Activated CD4-positive, alpha-beta T cell treated with anti-CD3 and anti-CD28 coated beads for 36 hours (primary cell): ENCODE measurements at regions of chr6 and their contacts with region 1.

Region 1: DNA sequence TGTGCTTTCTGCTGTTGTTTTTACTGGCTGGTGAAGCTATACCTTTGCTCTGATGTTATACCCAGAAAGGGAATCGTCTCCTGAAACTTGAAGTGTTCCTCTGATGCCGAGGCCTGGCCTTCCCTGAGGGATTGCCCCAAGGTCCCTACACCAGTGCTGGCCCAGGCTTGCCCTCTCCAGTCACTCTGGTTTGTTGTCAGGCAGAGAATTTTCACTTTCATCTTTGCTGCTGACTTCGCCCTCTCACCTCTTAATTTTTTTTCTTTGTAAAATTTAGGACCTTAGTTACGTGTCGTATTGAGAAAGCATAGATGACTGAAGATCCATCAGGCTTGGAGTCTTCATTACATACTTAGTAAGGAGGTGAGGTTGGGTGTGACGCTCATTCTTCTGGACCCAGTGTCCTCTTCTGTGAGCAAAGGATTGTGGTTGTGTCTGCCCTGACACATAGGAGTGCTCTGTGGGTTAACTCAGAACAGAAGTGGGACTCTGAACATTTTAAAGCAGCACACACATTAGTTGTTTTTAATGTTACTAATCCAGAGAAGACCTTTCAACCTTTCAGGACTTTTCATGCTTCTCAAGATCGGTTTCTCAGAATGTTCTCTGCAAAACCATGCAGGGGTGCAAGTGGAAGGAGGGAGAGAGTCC is 45.4 kb downstream of the TULP4 start:
- DNase-seq: peak; percentile 44
- ATAC-seq: peak; percentile 98
- H3K4me3 Mint-ChIP-seq: no peak overlapping the region
- H3K27ac Mint-ChIP-seq: peak overlapping the region; percentile 10
- H3K4me1 Mint-ChIP-seq: peaks cover 38% of the 10 kb centered on the region
- H3K27me3 Mint-ChIP-seq: no peaks in the 10 kb centered on the region

Region 2: GRCh38 chr6:158978757-158979156 is 621.1 kb after region 1 on chr6:
- CTCF ChIA-PET with region 1: no interaction called
- POLR2A ChIA-PET with region 1: interaction called, 12 read pairs
- intact Hi-C with region 1: no loop called
- DNase-seq: no peak
- ATAC-seq: no peak
- H3K4me3 Mint-ChIP-seq: no peak overlapping the region
- H3K27ac Mint-ChIP-seq: no peak overlapping the region
- H3K4me1 Mint-ChIP-seq: no peaks in the 10 kb centered on the region
- H3K27me3 Mint-ChIP-seq: no peaks in the 10 kb centered on the region